Activated naive CD8-positive, alpha-beta T cell treated with anti-CD3 and anti-CD28 coated beads, Interleukin-2, amount 10 ng/mL, durations not matched to agents 7 days and 5 days (primary cell): ENCODE measurements at regions of chr12 and their contacts with region 1.

Region 1: DNA sequence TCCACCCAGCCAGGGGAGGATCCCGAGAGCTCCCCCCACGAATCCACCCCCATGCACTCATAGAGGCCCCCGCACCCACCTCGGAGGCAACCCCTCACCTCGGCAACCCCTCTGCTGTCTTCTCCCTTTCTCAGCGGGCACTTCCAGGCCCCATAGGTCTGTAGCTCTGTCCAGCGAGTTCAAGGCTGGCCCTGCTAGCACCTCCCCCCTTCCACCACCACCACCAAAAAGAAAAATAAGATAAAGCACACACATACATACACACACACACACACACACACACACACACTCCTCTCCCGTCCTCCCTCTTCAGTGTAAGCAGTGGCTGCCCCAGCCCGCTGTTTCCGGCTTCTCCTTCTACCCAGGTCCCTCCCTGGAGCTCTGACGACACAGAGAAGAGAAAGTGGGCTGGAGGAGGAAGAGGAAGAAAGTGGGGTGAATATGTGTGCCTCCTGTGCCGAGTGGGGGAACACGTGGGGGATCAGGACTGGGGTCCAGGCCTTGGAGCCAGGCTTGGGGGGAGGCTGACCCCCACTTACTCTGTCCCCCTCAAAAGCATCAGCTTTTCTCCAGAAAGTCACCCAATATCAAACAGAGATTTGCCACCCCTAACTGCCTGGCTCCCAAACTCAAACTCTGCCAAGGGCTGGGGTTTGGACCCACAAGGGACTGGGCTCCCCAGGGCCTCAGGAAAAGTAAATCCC is at the start of gene STAT6:
- DNase-seq: peak; percentile 78
- ATAC-seq: peak; percentile 74
- H3K4me3 Mint-ChIP-seq: peak within 1 kb of the TSS; percentile 94
- H3K27ac Mint-ChIP-seq: peak within 1 kb of the TSS; percentile 97
- H3K4me1 Mint-ChIP-seq: peaks cover 37% of the 10 kb centered on the region
- H3K27me3 Mint-ChIP-seq: no peaks in the 10 kb centered on the region
- total RNA-seq, gene STAT6: 251 to 263 TPM

Region 2: GRCh38 chr12:57005980-57006808 is 105.0 kb before region 1 on chr12 and contains the start of gene ZBTB39:
- POLR2A ChIA-PET with region 1: interaction called, 37 read pairs
- DNase-seq: peak; percentile 86
- ATAC-seq: peak; percentile 74
- H3K4me3 Mint-ChIP-seq: peak within 1 kb of the TSS; percentile 94
- H3K27ac Mint-ChIP-seq: peak within 1 kb of the TSS; percentile 87
- H3K4me1 Mint-ChIP-seq: peaks cover 46% of the 10 kb centered on the region
- H3K27me3 Mint-ChIP-seq: no peaks in the 10 kb centered on the region
- total RNA-seq, gene ZBTB39: 11.3 TPM

Region 3: GRCh38 chr12:57063991-57064685 is 47.0 kb before region 1 on chr12:
- POLR2A ChIA-PET with region 1: interaction called, 122 read pairs
- DNase-seq: no peak
- ATAC-seq: peak; percentile 89
- H3K4me3 Mint-ChIP-seq: peak overlapping the region; percentile 70
- H3K27ac Mint-ChIP-seq: peak overlapping the region; percentile 91
- H3K4me1 Mint-ChIP-seq: peaks cover 27% of the 10 kb centered on the region
- H3K27me3 Mint-ChIP-seq: no peaks in the 10 kb centered on the region

Region 4: DNA sequence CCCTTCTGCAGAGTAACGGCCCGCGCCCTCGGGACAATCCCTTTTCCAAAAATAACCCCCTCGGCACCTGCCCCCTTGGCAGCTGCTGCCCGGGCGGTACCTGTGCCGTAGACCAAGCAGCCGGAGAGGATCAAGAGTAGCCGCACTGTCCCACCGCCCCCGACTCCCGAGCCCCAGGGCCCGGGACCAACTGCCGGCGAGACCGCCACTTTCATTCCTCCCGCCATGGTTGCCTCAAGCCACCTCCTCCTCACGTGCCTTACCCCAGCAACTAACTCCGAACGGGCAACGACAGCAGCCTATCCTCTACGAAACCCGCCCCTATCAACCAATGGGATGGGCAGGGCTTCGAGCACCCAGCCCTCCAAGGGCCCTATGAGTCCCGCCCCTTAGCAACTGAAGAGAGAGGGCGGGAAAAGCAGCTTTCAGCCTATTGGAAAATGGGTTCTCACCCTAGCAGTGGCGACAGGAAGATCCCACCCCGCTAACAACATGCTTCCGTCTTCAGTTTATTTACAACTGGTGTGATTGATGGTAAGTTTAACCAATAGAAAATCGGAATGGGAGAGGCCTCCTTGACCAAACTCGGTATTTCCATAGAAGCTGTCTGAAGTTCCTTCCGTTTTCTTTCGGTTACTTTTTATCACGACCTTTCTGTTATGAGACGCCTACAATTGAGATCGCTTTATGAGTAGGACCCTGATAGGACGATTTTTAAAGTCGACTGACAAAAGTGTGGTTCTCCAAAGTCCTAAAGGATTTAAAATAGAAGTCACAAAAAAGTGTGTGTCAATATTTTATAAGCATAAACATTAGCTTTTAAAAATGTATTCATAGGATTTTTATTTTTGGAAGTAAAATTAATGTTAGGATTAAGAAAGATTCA is 32.4 kb before region 1 on chr12 and contains the start of gene NEMP1:
- POLR2A ChIA-PET with region 1: interaction called, 122 read pairs
- DNase-seq: peak; percentile 83
- ATAC-seq: peak; percentile 93
- H3K4me3 Mint-ChIP-seq: peak within 1 kb of the TSS; percentile 98
- H3K27ac Mint-ChIP-seq: peak within 1 kb of the TSS; percentile 99
- H3K4me1 Mint-ChIP-seq: peaks cover 17% of the 10 kb centered on the region
- H3K27me3 Mint-ChIP-seq: no peaks in the 10 kb centered on the region
- total RNA-seq, gene NEMP1: 52.9 to 59.6 TPM

Region 5: GRCh38 chr12:57096099-57096572 is 15.0 kb before region 1 on chr12:
- POLR2A ChIA-PET with region 1: interaction called, 166 read pairs
- DNase-seq: no peak
- ATAC-seq: no peak
- H3K4me3 Mint-ChIP-seq: no peak overlapping the region
- H3K27ac Mint-ChIP-seq: peak overlapping the region; percentile 65
- H3K4me1 Mint-ChIP-seq: peaks cover 43% of the 10 kb centered on the region
- H3K27me3 Mint-ChIP-seq: no peaks in the 10 kb centered on the region

Region 6: GRCh38 chr12:57157588-57158173 is 46.5 kb after region 1 on chr12:
- POLR2A ChIA-PET with region 1: no interaction called
- DNase-seq: no peak
- ATAC-seq: peak; percentile 21
- H3K4me3 Mint-ChIP-seq: peak overlapping the region; percentile 62
- H3K27ac Mint-ChIP-seq: no peak overlapping the region
- H3K4me1 Mint-ChIP-seq: peaks cover 8% of the 10 kb centered on the region
- H3K27me3 Mint-ChIP-seq: peaks cover 3% of the 10 kb centered on the region